ENCODE measurements at regions of chr4 and their contacts with region 1.

Region 1: DNA sequence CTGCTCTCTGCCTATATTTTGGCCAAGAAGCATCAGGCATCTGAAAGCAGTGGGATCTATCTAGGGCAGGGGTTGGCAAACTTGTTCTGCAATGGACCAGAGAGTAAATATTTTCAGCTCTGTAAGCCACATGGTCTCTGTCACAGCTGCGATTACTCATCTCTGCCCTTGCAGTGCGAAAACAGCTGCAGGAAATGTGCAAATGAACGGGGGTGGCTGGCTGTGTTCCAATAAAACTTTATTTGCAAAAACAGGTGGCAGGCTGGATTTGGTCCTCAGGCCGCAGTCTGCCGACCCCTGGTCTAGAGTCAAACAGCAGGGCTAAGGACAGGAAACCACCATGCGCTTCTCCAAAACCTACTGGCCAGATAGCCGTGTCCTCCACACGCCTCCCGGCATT is 48.6 kb downstream of the ACOX3 start:
- DNase-seq: peak; percentile 45 to 78
- H3K4me3 ChIP-seq: no peak overlapping the region
- H3K27ac ChIP-seq: no peak overlapping the region
- H3K4me1 ChIP-seq: peaks cover 46% of the 10 kb centered on the region
- H3K27me3 ChIP-seq: no peaks in the 10 kb centered on the region
- CTCF ChIP-seq: no peak

Region 2: GRCh38 chr4:8315435-8316250 is 76.3 kb before region 1 on chr4:
- CTCF ChIA-PET with region 1: no interaction called
- POLR2A ChIA-PET with region 1: no interaction called
- intact Hi-C with region 1: loop called (anchors 2 kb)
- DNase-seq: peak; percentile 84 to 89
- H3K4me3 ChIP-seq: peak overlapping the region; percentile 18; the same call in 1 of the 2 replicates
- H3K27ac ChIP-seq: peak overlapping the region; percentile 59
- H3K4me1 ChIP-seq: peaks cover 24% of the 10 kb centered on the region
- H3K27me3 ChIP-seq: no peaks in the 10 kb centered on the region
- CTCF ChIP-seq: no peak

Region 3: DNA sequence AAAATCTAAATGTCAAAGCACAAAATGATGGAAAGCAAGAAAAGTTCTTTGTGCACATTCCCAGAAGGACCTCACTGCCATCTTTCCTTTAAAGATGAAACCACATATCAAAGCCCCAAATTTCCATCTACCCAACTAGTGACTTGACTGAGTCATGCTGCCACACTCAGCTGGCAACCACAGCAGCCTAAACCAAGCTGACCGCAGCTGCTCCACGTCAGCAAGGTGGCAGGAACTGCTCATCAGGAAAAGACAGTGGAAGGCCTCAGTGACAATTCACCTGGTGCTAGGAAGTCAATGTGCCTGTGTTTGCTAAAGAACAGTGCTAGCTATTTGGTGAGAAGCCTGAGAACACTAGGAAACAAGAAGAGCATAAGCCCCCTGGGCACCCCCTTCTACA is 22.4 kb after region 1 on chr4:
- CTCF ChIA-PET with region 1: no interaction called
- POLR2A ChIA-PET with region 1: no interaction called
- intact Hi-C with region 1: no loop called
- DNase-seq: no peak
- H3K4me3 ChIP-seq: no peak overlapping the region
- H3K27ac ChIP-seq: no peak overlapping the region
- H3K4me1 ChIP-seq: peaks cover 5% of the 10 kb centered on the region; the same call in 1 of the 2 replicates
- H3K27me3 ChIP-seq: no peaks in the 10 kb centered on the region
- CTCF ChIP-seq: no peak

Region 4: GRCh38 chr4:8780596-8781368 is 388.8 kb after region 1 on chr4:
- CTCF ChIA-PET with region 1: no interaction called
- POLR2A ChIA-PET with region 1: no interaction called
- intact Hi-C with region 1: no loop called
- DNase-seq: no peak
- H3K4me3 ChIP-seq: no peak overlapping the region
- H3K27ac ChIP-seq: no peak overlapping the region
- H3K4me1 ChIP-seq: no peaks in the 10 kb centered on the region
- H3K27me3 ChIP-seq: peaks cover 75% of the 10 kb centered on the region
- CTCF ChIP-seq: no peak

Region 5: GRCh38 chr4:8819473-8820177 is 427.7 kb after region 1 on chr4:
- CTCF ChIA-PET with region 1: no interaction called
- POLR2A ChIA-PET with region 1: no interaction called
- intact Hi-C with region 1: no loop called
- DNase-seq: no peak
- H3K4me3 ChIP-seq: no peak overlapping the region
- H3K27ac ChIP-seq: no peak overlapping the region
- H3K4me1 ChIP-seq: no peaks in the 10 kb centered on the region
- H3K27me3 ChIP-seq: peaks cover 29% of the 10 kb centered on the region
- CTCF ChIP-seq: no peak

Measured in PC-9 (cell line).